PC-3 (cell line): ENCODE measurements at regions of chr2 and their contacts with region 1.

Region 1: DNA sequence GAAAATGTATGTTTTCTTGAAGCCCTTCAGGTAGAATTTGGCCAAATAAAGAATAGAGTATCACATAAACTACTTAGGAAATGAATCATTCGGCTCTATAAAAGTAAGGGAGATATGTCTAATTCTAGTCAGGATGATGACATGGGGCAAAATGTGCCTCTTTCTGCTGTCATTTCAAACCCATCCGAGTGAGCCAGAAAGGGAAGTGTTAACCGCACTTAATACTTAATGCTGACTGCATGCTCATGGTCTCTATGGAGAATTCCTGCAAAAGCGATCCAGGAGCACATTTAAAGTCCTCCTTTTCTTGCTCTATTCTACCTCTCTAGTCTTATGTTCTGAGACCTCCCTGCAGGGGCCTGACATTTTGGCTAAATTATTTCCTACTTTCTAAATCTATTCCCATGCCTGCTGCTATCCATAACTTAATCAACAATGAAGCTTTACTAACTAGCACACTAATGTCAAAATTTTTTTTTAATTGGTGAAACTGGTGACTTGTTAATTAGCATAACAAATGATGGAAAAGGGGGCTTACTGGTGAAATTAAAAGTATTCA is 127.4 kb downstream of the CDC42EP3 start:
- DNase-seq: peak; percentile 27
- ATAC-seq: peak; percentile 76
- H3K4me3 ChIP-seq: no peak overlapping the region
- H3K27ac ChIP-seq: no peak overlapping the region
- H3K4me1 ChIP-seq: peaks cover 17% of the 10 kb centered on the region
- H3K27me3 ChIP-seq: no peaks in the 10 kb centered on the region
- CTCF ChIP-seq: no peak

Region 2: DNA sequence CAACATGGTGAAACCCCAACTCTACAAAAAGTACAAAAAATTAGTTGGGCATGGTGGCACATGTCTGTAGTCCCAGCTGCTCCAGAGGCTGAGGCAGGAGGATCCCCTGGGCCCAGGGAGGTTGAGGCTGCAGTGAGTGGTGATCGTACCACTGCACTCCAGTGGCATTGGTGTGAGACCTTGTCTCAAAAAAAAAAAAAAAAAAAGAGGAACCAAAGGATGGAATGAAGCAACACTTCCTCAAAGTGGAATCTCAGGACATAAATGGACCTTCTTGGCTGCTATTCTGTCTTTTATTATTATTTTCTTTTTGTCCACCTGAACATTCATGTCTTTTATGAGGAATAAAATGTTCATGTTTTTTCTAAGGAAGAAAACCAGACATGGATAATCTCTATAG is 1247.7 kb after region 1 on chr2:
- CTCF ChIA-PET with region 1: no interaction called
- POLR2A ChIA-PET with region 1: interaction called, 11 read pairs
- intact Hi-C with region 1: no loop called
- DNase-seq: no peak
- ATAC-seq: no peak
- H3K4me3 ChIP-seq: no peak overlapping the region
- H3K27ac ChIP-seq: no peak overlapping the region
- H3K4me1 ChIP-seq: no peaks in the 10 kb centered on the region
- H3K27me3 ChIP-seq: no peaks in the 10 kb centered on the region
- CTCF ChIP-seq: no peak